ENCODE measurements at regions of chr17 and their contacts with region 1.

Region 1: GRCh38 chr17:67696853-67697505 is 20.8 kb upstream of the NOL11 start:
- DNase-seq: no peak
- ATAC-seq: no peak
- H3K4me3 ChIP-seq: no peak overlapping the region
- H3K4me3 Mint-ChIP-seq: no peak overlapping the region
- H3K27ac ChIP-seq: no peak overlapping the region
- H3K27ac Mint-ChIP-seq: no peak overlapping the region
- H3K4me1 ChIP-seq: no peaks in the 10 kb centered on the region
- H3K4me1 Mint-ChIP-seq: no peaks in the 10 kb centered on the region
- H3K27me3 ChIP-seq: no peaks in the 10 kb centered on the region
- H3K27me3 Mint-ChIP-seq: no peaks in the 10 kb centered on the region

Region 2: GRCh38 chr17:67679225-67679624 is 17.8 kb before region 1 on chr17:
- CTCF ChIA-PET with region 1: no interaction called
- POLR2A ChIA-PET with region 1: no interaction called
- DNase-seq: no peak
- ATAC-seq: no peak
- H3K4me3 ChIP-seq: no peak overlapping the region
- H3K4me3 Mint-ChIP-seq: no peak overlapping the region
- H3K27ac ChIP-seq: no peak overlapping the region
- H3K27ac Mint-ChIP-seq: peak overlapping the region; percentile 60 to 86
- H3K4me1 ChIP-seq: no peaks in the 10 kb centered on the region
- H3K4me1 Mint-ChIP-seq: peaks cover 17 to 19% (median 17%) of the 10 kb centered on the region in 3 donors
- H3K27me3 ChIP-seq: no peaks in the 10 kb centered on the region
- H3K27me3 Mint-ChIP-seq: no peaks in the 10 kb centered on the region

Region 3: DNA sequence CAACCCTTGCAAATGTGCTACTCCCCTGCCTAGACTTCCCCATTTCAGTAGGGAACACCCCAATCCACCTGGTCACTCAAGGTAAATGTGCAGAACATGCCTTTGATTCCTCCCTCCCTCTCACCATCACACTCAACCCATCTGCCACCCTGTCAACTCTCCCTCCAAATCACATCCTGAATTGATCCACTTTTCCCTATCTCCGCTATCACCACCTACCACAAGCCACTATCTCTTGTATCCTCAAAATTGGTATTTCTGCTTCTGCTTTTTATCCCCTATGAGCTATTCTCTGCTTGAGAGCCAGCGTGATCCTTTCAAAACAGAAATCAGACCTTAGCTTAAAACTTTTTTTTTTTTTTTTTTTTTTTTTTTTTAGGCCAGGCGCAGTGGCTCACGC is 15.4 kb after region 1 on chr17:
- CTCF ChIA-PET with region 1: interaction called in 1 of 2 experiments, 5 read pairs
- POLR2A ChIA-PET with region 1: interaction called, 4 to 12 read pairs
- DNase-seq: no peak
- ATAC-seq: no peak
- H3K4me3 ChIP-seq: no peak overlapping the region
- H3K4me3 Mint-ChIP-seq: no peak overlapping the region
- H3K27ac ChIP-seq: no peak overlapping the region
- H3K27ac Mint-ChIP-seq: no peak overlapping the region
- H3K4me1 ChIP-seq: peaks cover 0 to 7% of the 10 kb centered on the region in 2 experiments
- H3K4me1 Mint-ChIP-seq: peaks cover 5 to 10% (median 8%) of the 10 kb centered on the region in 3 donors
- H3K27me3 ChIP-seq: peaks cover 0 to 9% of the 10 kb centered on the region in 2 experiments
- H3K27me3 Mint-ChIP-seq: peaks cover 0 to 3% of the 10 kb centered on the region in 2 donors

Region 4: GRCh38 chr17:67800495-67800928 is 103.5 kb after region 1 on chr17:
- CTCF ChIA-PET with region 1: no interaction called
- POLR2A ChIA-PET with region 1: no interaction called
- DNase-seq: peak in 28 of 35 experiments; percentile 4 to 55 (median 20)
- ATAC-seq: peak in 3 of 4 experiments; percentile 31 to 56 (median 40)
- H3K4me3 ChIP-seq: no peak overlapping the region
- H3K4me3 Mint-ChIP-seq: no peak overlapping the region
- H3K27ac ChIP-seq: no peak overlapping the region
- H3K27ac Mint-ChIP-seq: peak overlapping the region in 1 of 2 donors; percentile 43
- H3K4me1 ChIP-seq: no peaks in the 10 kb centered on the region
- H3K4me1 Mint-ChIP-seq: peaks cover 0 to 6% (median 0%) of the 10 kb centered on the region in 3 donors
- H3K27me3 ChIP-seq: peaks cover 0 to 12% of the 10 kb centered on the region in 2 experiments
- H3K27me3 Mint-ChIP-seq: peaks cover 0 to 3% of the 10 kb centered on the region in 2 donors

Measured in T-cell (primary cell).